ENCODE measurements at regions of chr6 and their contacts with region 1.

Region 1: DNA sequence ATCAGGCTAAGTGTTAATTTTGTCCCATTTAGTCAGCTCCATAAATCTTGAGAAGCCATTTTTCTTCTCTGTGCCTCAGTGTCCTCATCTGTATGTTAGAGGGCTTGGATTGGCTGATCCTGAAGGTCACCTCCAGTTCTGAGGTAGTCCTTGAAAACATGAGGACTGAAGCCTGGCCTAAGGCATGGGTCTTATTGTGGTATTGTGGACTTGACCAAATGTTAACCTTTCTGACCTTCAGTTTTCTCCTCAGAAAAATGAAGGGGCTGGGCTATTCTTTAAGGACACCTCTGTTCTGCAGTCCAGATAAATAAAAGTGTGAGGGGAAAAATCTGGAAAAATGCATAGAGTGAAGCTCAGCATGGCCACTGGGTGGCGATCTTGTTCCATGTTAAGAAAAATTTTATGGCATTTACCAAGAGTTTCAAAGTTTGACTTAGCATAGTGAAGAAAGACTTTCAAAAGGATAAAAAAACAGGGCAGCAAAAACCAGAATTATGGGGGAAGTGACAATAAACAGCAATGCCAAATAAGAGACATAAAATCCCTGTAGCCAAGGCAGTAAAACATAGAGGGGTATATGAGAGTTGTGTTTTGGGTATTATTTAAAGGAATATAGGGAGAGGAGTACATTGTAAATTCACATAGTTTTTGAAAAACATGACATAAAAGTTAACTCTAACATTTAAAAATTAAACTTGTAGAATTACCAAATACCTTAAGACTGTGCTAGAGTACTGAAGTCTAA is 13.2 kb upstream of the TFB1M start:
- DNase-seq: peak; percentile 84
- H3K4me3 ChIP-seq: no peak overlapping the region
- H3K27ac ChIP-seq: peak overlapping the region; percentile 7
- H3K4me1 ChIP-seq: peaks cover 9% of the 10 kb centered on the region
- H3K27me3 ChIP-seq: no peaks in the 10 kb centered on the region
- CTCF ChIP-seq: peak; percentile 50 to 58
- POLR2A ChIP-seq: no peak

Region 2: DNA sequence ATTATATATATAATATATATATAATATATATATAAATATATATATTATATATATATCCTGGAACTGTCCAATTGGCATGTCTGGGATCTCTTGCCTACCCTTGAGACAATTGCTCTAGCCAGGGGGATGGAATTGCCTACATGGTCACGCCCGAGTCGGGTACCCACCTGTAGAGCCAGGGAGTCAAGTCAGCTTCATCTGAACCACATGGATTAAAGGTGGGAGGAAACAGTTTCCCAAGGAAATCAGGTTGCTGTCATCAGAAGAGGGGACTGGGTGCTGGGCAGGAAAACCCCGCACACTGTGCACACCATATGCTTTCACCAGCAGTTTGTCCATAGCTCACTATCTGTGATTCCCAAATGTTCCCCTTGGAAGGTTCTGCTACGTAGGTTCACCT is 380.6 kb after region 1 on chr6:
- CTCF ChIA-PET with region 1: no interaction called
- POLR2A ChIA-PET with region 1: no interaction called
- dilution Hi-C with region 1: no loop called
- intact Hi-C with region 1: loop called (anchors 10 kb)
- DNase-seq: no peak
- H3K4me3 ChIP-seq: no peak overlapping the region
- H3K27ac ChIP-seq: no peak overlapping the region
- H3K4me1 ChIP-seq: peaks cover 9% of the 10 kb centered on the region
- H3K27me3 ChIP-seq: no peaks in the 10 kb centered on the region
- CTCF ChIP-seq: no peak
- POLR2A ChIP-seq: no peak

Region 3: GRCh38 chr6:155882527-155883333 is 555.2 kb after region 1 on chr6:
- CTCF ChIA-PET with region 1: interaction called, 3 read pairs
- POLR2A ChIA-PET with region 1: no interaction called
- dilution Hi-C with region 1: no loop called
- intact Hi-C with region 1: loop called (anchors 5 kb)
- DNase-seq: peak; percentile 60
- H3K4me3 ChIP-seq: no peak overlapping the region
- H3K27ac ChIP-seq: peak overlapping the region; percentile 53
- H3K4me1 ChIP-seq: peaks cover 43% of the 10 kb centered on the region
- H3K27me3 ChIP-seq: no peaks in the 10 kb centered on the region
- CTCF ChIP-seq: no peak
- POLR2A ChIP-seq: no peak

Region 4: GRCh38 chr6:156359912-156360311 is 1032.4 kb after region 1 on chr6:
- CTCF ChIA-PET with region 1: interaction called, 4 read pairs
- POLR2A ChIA-PET with region 1: no interaction called
- dilution Hi-C with region 1: no loop called
- intact Hi-C with region 1: loop called (anchors 5 kb)
- DNase-seq: no peak
- H3K4me3 ChIP-seq: no peak overlapping the region
- H3K27ac ChIP-seq: no peak overlapping the region
- H3K4me1 ChIP-seq: no peaks in the 10 kb centered on the region
- H3K27me3 ChIP-seq: no peaks in the 10 kb centered on the region
- CTCF ChIP-seq: peak in 1 of 2 donors; percentile 13
- POLR2A ChIP-seq: no peak